Right lobe of liver (tissue), 6 donors: ENCODE measurements at regions of chr5 and their contacts with region 1.

Region 1: GRCh38 chr5:150656191-150657132 is 4.6 kb upstream of the MYOZ3 start:
- DNase-seq: peak; percentile 74 to 80 (median 79)
- ATAC-seq: peak; percentile 68 to 82 (median 74)
- H3K4me3 ChIP-seq: peak overlapping the region; percentile 33 to 47 (median 46)
- H3K27ac ChIP-seq: peak overlapping the region in 2 of 3 donors; percentile 31 to 59
- H3K4me1 ChIP-seq: peaks cover 0 to 23% (median 5%) of the 10 kb centered on the region in 4 donors
- H3K27me3 ChIP-seq: no peaks in the 10 kb centered on the region
- CTCF ChIP-seq: peak; percentile 49 to 92 (median 69)
- POLR2A ChIP-seq: peak; percentile 6

Region 2: DNA sequence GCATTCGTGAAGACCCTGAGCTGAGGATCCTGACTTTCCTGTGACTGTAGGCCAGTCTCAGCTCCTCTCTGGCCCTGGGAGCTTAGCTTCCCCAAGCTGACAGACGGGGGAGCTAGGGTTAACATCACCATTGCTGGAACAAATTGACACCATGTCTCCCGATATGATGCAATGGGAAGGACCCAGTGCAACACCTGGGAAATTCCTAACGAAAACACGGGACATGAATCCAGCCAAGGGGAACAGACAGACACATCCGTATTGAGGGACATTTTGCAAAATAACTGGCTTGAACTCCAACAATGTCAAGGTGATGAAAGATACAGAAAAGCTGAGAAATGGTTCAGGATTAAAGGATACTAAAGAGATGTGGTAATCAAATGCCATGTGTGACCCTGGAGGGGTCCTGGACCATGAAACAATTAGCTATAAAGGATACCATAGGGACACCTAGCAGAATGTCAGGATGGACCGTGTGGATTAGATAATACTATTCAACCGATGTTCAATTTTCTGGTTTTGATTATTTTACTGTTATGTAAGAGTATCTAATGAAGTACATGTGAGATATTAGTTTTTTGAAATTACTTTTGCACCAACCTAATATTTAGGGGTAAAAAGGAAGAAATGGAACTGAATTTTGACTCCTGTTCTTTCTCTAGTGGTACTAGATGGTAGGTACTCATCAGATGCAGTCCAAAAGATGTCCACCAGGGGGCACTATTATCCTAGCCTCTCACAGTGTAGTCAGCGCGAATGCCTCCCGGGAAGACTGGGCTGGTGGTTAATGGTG is 95.9 kb before region 1 on chr5:
- intact Hi-C with region 1: loop called (anchors 5 kb)
- DNase-seq: peak in 1 of 3 donors; percentile 87
- ATAC-seq: peak; percentile 69 to 86 (median 80)
- H3K4me3 ChIP-seq: no peak overlapping the region
- H3K27ac ChIP-seq: no peak overlapping the region
- H3K4me1 ChIP-seq: peaks cover 0 to 8% (median 0%) of the 10 kb centered on the region in 4 donors
- H3K27me3 ChIP-seq: no peaks in the 10 kb centered on the region
- CTCF ChIP-seq: peak; percentile 92 to 96 (median 96)
- POLR2A ChIP-seq: no peak

Region 3: GRCh38 chr5:150574818-150575547 is 81.5 kb before region 1 on chr5:
- intact Hi-C with region 1: loop called in 1 of 2 experiments (anchors 5 kb)
- DNase-seq: no peak
- ATAC-seq: no peak
- H3K4me3 ChIP-seq: no peak overlapping the region
- H3K27ac ChIP-seq: no peak overlapping the region
- H3K4me1 ChIP-seq: no peaks in the 10 kb centered on the region
- H3K27me3 ChIP-seq: no peaks in the 10 kb centered on the region
- CTCF ChIP-seq: no peak
- POLR2A ChIP-seq: no peak